ENCODE measurements at regions of chr7 and their contacts with region 1.

Region 1: DNA sequence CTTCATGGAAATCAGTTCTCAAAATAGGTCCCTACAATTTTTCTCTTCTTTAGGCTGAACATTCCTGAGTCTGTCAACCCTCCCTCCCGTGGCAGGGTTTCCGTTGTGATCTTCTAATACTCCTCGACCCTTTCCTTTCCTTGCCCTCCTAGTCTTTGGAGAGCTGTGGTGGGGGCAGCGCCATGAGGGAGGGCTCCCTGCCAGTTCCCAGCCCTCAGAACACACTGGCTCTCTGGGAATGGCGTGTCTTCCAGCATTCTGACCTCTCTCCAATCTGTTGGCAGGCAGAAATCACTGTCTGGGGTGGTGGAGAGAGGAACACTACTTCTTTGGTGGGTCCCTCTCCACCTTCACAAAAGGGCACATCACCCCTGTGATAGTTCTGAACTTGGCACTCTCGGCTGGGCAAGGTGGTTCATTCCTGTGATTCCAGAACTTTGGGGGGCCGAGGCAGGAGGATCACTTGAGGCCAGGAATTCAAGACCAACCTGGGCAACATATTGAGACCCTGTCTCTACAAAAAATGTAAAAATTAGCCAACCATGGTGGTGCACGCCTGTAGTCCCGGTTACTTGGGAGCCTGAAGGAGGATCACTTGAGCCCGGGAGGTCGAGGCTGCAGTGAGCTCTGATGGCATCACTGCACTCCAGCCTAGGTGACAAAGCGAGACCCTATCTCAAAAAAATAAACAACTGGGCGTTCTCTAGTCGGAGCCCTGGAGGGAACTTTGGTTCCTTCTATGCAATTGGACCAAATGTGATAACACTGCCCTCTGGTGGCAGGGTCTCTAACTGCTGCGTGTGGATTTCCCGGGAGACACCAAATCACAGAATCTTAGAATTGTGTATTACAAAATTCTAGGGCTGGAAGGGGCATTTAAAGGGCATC is 13.1 kb upstream of the ARPC1A start:
- DNase-seq: peak; percentile 66
- H3K4me3 ChIP-seq: no peak overlapping the region
- H3K27ac ChIP-seq: no peak overlapping the region
- H3K4me1 ChIP-seq: no peaks in the 10 kb centered on the region
- H3K27me3 ChIP-seq: no peaks in the 10 kb centered on the region
- CTCF ChIP-seq: peak; percentile 75 to 96 (median 88)
- POLR2A ChIP-seq: no peak

Region 2: DNA sequence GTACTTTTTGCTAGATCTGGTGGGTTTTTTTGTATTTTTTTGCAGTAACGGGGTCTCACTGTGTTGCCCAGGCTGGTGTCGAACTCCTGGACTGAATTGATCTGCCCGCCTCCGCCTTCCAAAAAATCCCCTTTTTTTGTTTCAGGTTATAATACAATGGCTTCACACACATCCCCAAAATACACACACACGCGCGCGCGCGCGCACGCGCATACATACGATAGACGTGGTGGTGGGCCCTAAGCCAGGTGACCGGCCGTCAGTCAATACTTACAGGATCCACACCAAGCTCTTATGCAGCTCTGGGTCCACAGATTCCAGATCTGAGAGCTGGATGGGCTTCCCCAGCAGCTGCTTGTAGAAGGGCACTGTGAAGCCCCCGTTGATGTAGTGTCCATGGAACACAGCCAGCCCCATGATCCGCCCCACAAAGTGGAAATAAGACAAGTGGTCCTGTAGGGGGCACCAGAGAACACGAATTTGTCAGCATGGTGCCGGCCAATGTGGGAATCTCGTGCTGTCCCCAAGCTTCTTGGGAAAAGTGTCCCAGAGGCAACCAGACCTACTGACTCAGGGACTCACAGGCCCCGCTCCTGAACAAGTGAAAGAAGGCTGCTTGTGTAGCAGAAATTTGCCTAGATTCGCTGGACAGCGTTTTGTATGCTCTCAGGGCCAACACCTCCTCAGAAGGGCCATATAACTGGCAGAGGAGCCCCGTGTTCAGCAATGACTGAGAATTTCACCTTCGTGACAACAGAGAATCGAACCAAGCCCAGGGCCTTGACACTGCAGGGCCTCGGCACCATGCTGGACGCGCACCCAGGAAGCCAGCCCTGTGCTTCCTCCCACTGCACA is 272.2 kb before region 1 on chr7:
- intact Hi-C with region 1: loop called (anchors 1 kb)
- DNase-seq: peak; percentile 86
- H3K4me3 ChIP-seq: no peak overlapping the region
- H3K27ac ChIP-seq: no peak overlapping the region
- H3K4me1 ChIP-seq: peaks cover 6% of the 10 kb centered on the region
- H3K27me3 ChIP-seq: no peaks in the 10 kb centered on the region
- CTCF ChIP-seq: peak; percentile 60 to 87 (median 84)
- POLR2A ChIP-seq: no peak

Region 3: GRCh38 chr7:99571768-99572167 is 259.2 kb after region 1 on chr7:
- intact Hi-C with region 1: no loop called
- DNase-seq: no peak
- H3K4me3 ChIP-seq: no peak overlapping the region
- H3K27ac ChIP-seq: no peak overlapping the region
- H3K4me1 ChIP-seq: no peaks in the 10 kb centered on the region
- H3K27me3 ChIP-seq: no peaks in the 10 kb centered on the region
- CTCF ChIP-seq: no peak
- POLR2A ChIP-seq: no peak

Measured in prostate gland (tissue), 2 donors.